ENCODE measurements at regions of chr4 and their contacts with region 1.

Region 1: DNA sequence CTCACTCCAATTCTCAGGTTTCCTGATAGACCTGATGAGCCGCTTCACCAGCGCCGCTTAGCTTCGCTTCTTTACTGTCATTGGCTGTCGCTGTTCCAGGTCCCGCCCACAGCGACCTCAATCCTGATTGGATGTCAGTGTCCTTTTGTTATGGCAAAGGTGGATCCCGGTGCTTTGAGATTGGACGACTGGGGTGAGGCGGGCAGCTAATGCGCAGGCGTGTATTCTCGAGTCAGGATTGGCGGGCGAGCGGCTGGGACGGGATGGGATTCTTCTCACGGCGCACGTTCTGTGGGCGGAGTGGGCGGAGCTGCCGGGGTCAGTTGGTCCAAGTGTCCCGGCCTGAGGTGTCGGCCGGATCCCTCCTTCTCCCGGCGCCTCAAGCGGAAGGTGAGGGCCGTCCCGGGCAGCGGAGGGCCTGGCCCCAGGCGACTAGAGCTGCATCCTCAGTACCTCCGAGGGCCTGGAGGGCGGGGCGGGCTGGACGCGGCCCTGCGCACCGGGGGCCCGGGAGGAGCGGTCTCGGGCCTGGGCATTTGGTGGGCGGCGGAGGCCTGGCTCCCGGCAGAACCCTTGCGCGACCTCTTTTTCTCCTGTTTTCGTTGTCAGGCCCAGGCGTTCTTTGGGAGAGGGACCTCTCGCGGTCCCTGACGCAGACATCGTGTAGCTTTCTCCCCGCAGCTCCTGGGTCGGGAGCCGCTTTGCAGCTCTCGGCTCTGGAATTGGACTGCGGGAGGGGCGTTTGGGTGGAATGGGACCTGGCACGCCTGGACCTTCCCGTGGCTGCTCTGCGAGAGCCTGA is at the start of gene SCOC:
- DNase-seq: peak; percentile 99
- ATAC-seq: peak; percentile 99
- H3K4me3 ChIP-seq: peak within 1 kb of the TSS; percentile 69
- H3K27ac ChIP-seq: peak within 1 kb of the TSS; percentile 90
- H3K4me1 ChIP-seq: peaks cover 2% of the 10 kb centered on the region
- H3K27me3 ChIP-seq: no peaks in the 10 kb centered on the region
- total RNA-seq, gene SCOC: 82.3 to 98.1 (median 88.6) TPM

Region 2: DNA sequence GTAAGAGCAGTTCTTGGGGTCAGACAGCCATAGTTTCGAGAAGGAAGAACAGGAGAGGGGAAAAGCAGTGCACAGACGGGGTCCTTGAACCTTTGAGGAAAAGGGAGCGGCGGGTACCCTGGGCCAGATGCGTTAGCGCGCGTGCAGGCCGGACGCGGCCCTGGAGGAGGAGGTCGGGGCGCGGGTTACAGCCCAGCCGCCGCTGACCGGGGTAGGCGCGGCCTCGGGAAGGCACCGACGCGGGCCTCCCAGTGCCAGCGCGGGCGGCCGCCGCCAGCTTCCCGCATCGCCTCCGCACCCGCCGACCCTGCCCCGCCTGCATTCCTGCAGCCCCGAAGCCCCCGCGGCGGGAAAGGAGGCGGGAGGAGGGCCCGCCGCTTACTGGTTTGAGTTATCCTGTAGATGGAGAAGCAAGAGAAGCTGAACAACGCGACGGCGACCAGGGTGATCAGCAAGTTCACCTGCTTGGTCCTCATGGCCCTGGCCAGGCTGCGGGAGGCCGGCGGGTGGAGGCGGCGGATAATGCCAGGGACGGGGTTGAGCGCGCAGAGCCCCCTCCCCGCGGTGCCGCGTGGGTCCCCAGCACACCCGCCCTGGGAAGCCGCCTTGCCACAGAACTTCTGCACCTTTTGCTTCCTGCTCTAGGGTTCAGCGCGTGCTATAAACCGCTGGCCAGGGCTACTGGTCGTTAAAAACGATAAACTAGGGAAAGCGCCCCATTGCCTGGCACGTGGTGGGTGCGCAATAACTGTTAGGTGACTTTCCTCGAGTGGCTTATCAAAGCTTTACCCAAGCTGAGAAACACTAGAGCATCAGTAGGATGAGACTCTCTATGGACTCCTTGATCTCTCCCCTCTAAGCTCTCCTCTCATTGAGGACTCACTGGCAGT is 124.5 kb after region 1 on chr4 and contains the start of gene MGAT4D:
- intact Hi-C with region 1: no loop called
- DNase-seq: peak in 2 of 3 donors; percentile 44 to 46
- ATAC-seq: peak in 1 of 2 donors; percentile 53
- H3K4me3 ChIP-seq: peak within 1 kb of the TSS; percentile 29
- H3K27ac ChIP-seq: no peak within 1 kb of the TSS
- H3K4me1 ChIP-seq: no peaks in the 10 kb centered on the region
- H3K27me3 ChIP-seq: no peaks in the 10 kb centered on the region
- total RNA-seq, gene MGAT4D: not detected

Region 3: GRCh38 chr4:140529434-140529833 is 155.9 kb after region 1 on chr4:
- intact Hi-C with region 1: loop called in 1 of 4 experiments (anchors 5 kb)
- DNase-seq: no peak
- ATAC-seq: peak; percentile 73 to 84
- H3K4me3 ChIP-seq: no peak overlapping the region
- H3K27ac ChIP-seq: no peak overlapping the region
- H3K4me1 ChIP-seq: no peaks in the 10 kb centered on the region
- H3K27me3 ChIP-seq: no peaks in the 10 kb centered on the region

Measured in right cardiac atrium (tissue), 5 donors.